ENCODE measurements at regions of chr9 and their contacts with region 1.

Region 1: DNA sequence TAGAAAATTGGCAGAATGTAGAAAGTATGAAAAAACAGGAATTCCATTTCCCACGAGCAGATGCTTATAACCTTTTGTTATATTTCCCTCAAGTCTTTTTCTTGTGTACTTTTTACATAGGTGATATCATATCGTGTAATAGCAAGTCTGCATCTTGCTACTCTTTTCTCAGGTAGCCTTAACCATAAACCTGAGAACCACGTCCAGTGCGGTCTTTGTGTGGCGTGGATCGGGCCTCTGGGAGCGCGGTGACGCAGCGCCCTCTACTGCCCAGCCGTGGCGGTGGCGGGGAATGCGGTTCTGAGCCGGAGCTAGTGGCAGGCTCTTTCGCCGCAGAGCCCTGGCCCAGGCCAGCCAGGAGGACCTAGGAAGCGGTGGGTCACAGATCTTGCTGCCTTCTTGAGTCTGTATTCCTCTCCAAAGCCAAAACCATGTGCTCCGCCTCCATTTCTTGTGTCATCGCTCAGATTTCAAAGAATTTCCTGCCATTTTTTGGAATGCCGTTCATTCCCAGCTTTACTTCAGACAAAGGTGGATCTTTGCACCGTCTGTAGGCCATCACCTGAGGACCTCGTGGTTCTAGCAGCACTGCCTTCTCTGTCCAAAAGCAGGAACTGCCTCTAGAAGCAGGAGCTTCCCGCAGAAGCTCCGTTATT is 71.9 kb downstream of the MVB12B start:
- DNase-seq: peak; percentile 93
- H3K4me3 ChIP-seq: no peak overlapping the region
- H3K27ac ChIP-seq: no peak overlapping the region
- H3K4me1 ChIP-seq: peaks cover 5 to 27% (median 15%) of the 10 kb centered on the region in 4 donors
- H3K27me3 ChIP-seq: no peaks in the 10 kb centered on the region
- CTCF ChIP-seq: peak; percentile 95 to 100 (median 95)
- EP300 ChIP-seq: no peak
- POLR2A ChIP-seq: no peak

Region 2: GRCh38 chr9:126301985-126302603 is 96.4 kb before region 1 on chr9:
- intact Hi-C with region 1: loop called (anchors 5 kb)
- DNase-seq: no peak
- H3K4me3 ChIP-seq: no peak overlapping the region
- H3K27ac ChIP-seq: no peak overlapping the region
- H3K4me1 ChIP-seq: peaks cover 0 to 1% (median 0%) of the 10 kb centered on the region in 4 donors
- H3K27me3 ChIP-seq: no peaks in the 10 kb centered on the region
- CTCF ChIP-seq: peak; percentile 55 to 68 (median 55)
- EP300 ChIP-seq: no peak
- POLR2A ChIP-seq: no peak

Region 3: DNA sequence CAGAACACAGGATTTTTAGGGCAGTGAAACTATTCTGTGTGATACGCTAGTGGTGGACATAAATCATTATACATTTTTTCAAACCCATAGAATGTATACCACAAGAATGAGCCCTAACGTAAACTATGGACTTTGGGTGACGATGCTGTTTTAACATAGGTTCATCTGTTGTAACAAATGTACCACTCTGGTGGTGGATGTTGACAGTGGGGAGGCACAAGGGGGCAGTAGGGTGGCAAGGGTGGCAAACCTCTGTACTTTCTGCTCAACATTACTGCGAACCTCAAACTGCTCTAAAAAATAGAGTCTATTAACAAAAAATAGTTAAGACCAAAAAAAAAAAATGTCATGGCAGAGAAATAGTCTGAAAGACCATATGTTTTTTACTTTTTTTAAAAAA is 81.0 kb before region 1 on chr9:
- intact Hi-C with region 1: loop called (anchors 5 kb)
- DNase-seq: no peak
- H3K4me3 ChIP-seq: no peak overlapping the region
- H3K27ac ChIP-seq: no peak overlapping the region
- H3K4me1 ChIP-seq: no peaks in the 10 kb centered on the region
- H3K27me3 ChIP-seq: no peaks in the 10 kb centered on the region
- CTCF ChIP-seq: peak; percentile 36 to 55 (median 55)
- EP300 ChIP-seq: no peak
- POLR2A ChIP-seq: no peak

Region 4: GRCh38 chr9:127611899-127612790 is 1213.6 kb after region 1 on chr9 and contains the start of gene STXBP1:
- intact Hi-C with region 1: no loop called
- DNase-seq: peak; percentile 95
- H3K4me3 ChIP-seq: peak within 1 kb of the TSS; percentile 88 to 98 (median 95)
- H3K27ac ChIP-seq: peak within 1 kb of the TSS; percentile 90 to 95 (median 94)
- H3K4me1 ChIP-seq: peaks cover 11 to 42% (median 38%) of the 10 kb centered on the region in 4 donors
- H3K27me3 ChIP-seq: no peaks in the 10 kb centered on the region
- CTCF ChIP-seq: peak in 1 of 3 experiments; percentile 27
- EP300 ChIP-seq: no peak
- POLR2A ChIP-seq: peak; percentile 72
- total RNA-seq, gene STXBP1: 17.2 to 34.0 (median 19.8) TPM

Measured in esophagus muscularis mucosa (tissue), 4 donors.